Heart right ventricle (tissue), 16 donors: ENCODE measurements at regions of chr16 and their contacts with region 1.

Region 1: DNA sequence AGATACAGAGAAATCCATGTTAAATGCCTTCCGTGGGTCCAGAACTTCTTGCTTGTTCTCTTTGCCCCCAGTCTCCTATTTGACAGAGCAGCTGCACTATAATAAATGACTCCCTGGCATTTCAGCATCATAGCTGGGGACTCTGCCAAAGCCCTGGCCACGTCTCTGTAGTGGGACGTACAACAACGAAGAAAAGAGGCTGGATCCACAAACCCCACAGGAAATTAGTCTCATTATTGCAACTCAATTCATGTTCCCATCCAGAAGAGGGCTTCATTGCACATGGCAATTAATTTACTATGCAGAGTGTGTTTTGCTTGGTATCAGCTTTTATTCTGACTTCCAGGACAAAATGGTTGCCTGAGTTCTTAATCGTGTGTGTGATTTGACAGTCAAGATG is 121.3 kb downstream of the CDH13 start:
- DNase-seq: peak; percentile 28 to 57
- ATAC-seq: peak in 7 of 8 donors; percentile 52 to 79 (median 75)
- H3K4me3 ChIP-seq: no peak overlapping the region
- H3K27ac ChIP-seq: peak overlapping the region in 6 of 10 donors; percentile 15 to 61 (median 42)
- H3K4me1 ChIP-seq: peaks cover 0 to 53% (median 18%) of the 10 kb centered on the region in 9 donors
- H3K27me3 ChIP-seq: no peaks in the 10 kb centered on the region
- CTCF ChIP-seq: peak in 8 of 9 donors; percentile 13 to 56 (median 32)

Region 2: DNA sequence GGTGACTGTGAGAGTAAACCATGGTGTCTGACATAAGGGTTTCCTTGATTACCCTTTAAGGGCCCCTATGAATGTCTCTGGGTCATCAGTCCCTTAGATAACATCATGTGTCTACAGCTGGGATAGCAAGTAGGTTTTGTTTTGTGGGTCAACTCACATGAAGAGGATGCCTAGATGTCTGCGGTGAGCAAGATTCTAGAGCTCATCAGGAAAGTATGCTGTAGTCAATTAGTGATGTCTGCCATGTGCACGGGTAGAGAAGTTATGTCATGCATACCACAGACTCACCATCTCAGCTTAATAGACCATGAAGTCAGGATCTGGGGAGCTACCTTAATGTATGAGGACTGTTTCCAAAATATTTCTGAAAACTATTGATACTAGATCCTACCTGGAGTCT is 63.8 kb before region 1 on chr16:
- intact Hi-C with region 1: no loop called
- DNase-seq: no peak
- ATAC-seq: no peak
- H3K4me3 ChIP-seq: no peak overlapping the region
- H3K27ac ChIP-seq: no peak overlapping the region
- H3K4me1 ChIP-seq: peaks cover 0 to 26% (median 2%) of the 10 kb centered on the region in 9 donors
- H3K27me3 ChIP-seq: no peaks in the 10 kb centered on the region
- CTCF ChIP-seq: no peak

Region 3: DNA sequence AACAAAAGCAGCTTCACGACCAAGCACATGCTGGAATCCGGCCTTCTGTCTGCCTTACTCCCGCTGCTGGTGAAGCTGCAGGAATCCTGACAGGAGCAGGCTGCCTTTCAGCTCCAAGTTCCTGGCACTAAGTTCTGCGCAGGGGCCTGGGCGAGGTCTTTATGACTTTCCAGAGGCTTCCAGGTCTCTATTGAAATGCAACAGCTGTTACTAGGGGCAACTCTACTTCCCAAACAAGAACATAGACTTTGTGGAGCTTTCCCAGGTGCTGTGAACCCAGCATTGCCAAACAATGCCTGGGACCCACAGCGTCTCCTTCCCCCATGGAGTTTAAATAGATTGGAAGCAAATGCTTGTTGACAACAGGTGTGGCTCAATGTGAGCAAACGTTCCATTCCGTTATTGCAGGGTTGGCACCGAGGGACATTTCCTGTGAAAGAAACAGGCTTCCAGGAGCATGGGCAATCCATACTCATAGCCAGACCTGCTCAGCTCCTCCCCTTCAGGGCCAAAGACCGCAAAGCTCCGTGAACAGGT is 34.8 kb after region 1 on chr16:
- intact Hi-C with region 1: no loop called
- DNase-seq: peak; percentile 21 to 24
- ATAC-seq: peak; percentile 44 to 78 (median 70)
- H3K4me3 ChIP-seq: no peak overlapping the region
- H3K27ac ChIP-seq: peak overlapping the region in 8 of 10 donors; percentile 5 to 56 (median 39)
- H3K4me1 ChIP-seq: peaks cover 4 to 47% (median 26%) of the 10 kb centered on the region in 9 donors
- H3K27me3 ChIP-seq: no peaks in the 10 kb centered on the region
- CTCF ChIP-seq: no peak

Region 4: GRCh38 chr16:82855471-82855870 is 107.4 kb after region 1 on chr16:
- intact Hi-C with region 1: no loop called
- DNase-seq: no peak
- ATAC-seq: peak in 4 of 8 donors; percentile 35 to 68 (median 44)
- H3K4me3 ChIP-seq: no peak overlapping the region
- H3K27ac ChIP-seq: no peak overlapping the region
- H3K4me1 ChIP-seq: peaks cover 0 to 22% (median 0%) of the 10 kb centered on the region in 9 donors
- H3K27me3 ChIP-seq: no peaks in the 10 kb centered on the region
- CTCF ChIP-seq: no peak

Region 5: GRCh38 chr16:83068686-83069085 is 320.7 kb after region 1 on chr16:
- intact Hi-C with region 1: loop called in 1 of 10 experiments (anchors 5 kb)
- DNase-seq: peak in 1 of 2 donors; percentile 4
- ATAC-seq: peak in 1 of 8 donors; percentile 25
- H3K4me3 ChIP-seq: no peak overlapping the region
- H3K27ac ChIP-seq: no peak overlapping the region
- H3K4me1 ChIP-seq: peaks cover 0 to 9% (median 1%) of the 10 kb centered on the region in 9 donors
- H3K27me3 ChIP-seq: no peaks in the 10 kb centered on the region
- CTCF ChIP-seq: peak in 7 of 9 donors; percentile 15 to 59 (median 36)